Transverse colon (tissue), 4 donors: ENCODE measurements at regions of chr7 and their contacts with region 1.

Region 1: DNA sequence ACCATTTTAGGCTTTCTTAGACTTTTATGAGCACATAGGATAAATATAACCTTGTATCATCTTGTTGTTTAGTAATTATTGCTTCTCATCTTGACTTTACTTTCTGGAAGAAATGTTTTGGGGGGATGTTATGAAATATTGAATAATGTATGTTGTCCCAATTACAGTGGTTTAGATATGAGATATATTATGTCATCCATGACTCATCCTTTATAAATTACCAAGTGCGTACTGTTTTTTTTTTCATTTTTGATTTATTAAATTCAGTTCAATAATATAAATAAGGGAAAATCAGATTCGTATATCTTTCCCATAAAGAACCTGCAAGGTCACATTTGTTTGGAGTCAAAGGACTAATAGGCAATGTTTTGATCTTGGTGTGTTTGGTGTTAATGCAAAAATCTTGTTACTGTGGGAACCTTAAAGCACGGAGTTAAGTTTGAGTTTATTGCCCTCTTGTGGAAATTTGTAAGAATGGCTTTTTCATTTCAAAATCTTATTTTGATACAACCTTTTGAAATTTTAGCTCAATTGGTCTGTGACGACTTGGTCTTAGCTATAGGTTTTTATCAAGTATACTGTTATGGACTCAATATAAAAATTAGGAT is 108.6 kb downstream of the SRI start:
- DNase-seq: no peak
- H3K4me3 ChIP-seq: no peak overlapping the region
- H3K27ac ChIP-seq: no peak overlapping the region
- H3K4me1 ChIP-seq: no peaks in the 10 kb centered on the region
- H3K27me3 ChIP-seq: no peaks in the 10 kb centered on the region
- CTCF ChIP-seq: peak; percentile 40 to 53 (median 51)
- EP300 ChIP-seq: no peak
- POLR2A ChIP-seq: no peak

Region 2: GRCh38 chr7:87797798-87798403 is 313.3 kb before region 1 on chr7:
- in situ Hi-C with region 1: loop called in 2 of 4 experiments (anchors 25 kb)
- intact Hi-C with region 1: no loop called
- DNase-seq: no peak
- H3K4me3 ChIP-seq: no peak overlapping the region
- H3K27ac ChIP-seq: no peak overlapping the region
- H3K4me1 ChIP-seq: peaks cover 0 to 4% (median 1%) of the 10 kb centered on the region in 4 donors
- H3K27me3 ChIP-seq: no peaks in the 10 kb centered on the region
- CTCF ChIP-seq: peak; percentile 38 to 62 (median 47)
- EP300 ChIP-seq: no peak
- POLR2A ChIP-seq: no peak

Region 3: DNA sequence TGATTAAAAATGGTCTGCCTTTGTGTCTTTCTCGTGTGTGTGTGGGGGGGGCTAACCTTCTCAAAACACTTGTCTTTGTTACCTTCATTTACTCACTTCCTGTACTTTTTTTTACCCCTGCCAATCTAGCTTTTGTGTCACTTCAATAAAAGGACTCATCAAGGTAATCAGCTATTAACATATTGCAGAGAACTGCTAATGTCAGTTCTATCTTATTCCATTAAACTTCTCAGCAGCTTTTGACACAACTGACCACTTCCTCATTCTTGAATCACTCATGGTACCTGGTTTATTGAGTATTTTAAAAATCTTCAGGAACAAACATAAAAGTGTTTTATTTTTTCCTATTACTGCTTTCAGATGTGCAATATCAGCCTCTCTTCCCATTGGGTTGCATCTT is 294.9 kb before region 1 on chr7:
- in situ Hi-C with region 1: loop called in 1 of 4 experiments (anchors 25 kb)
- intact Hi-C with region 1: no loop called
- DNase-seq: no peak
- H3K4me3 ChIP-seq: no peak overlapping the region
- H3K27ac ChIP-seq: no peak overlapping the region
- H3K4me1 ChIP-seq: no peaks in the 10 kb centered on the region
- H3K27me3 ChIP-seq: no peaks in the 10 kb centered on the region
- CTCF ChIP-seq: no peak
- EP300 ChIP-seq: no peak
- POLR2A ChIP-seq: no peak

Region 4: DNA sequence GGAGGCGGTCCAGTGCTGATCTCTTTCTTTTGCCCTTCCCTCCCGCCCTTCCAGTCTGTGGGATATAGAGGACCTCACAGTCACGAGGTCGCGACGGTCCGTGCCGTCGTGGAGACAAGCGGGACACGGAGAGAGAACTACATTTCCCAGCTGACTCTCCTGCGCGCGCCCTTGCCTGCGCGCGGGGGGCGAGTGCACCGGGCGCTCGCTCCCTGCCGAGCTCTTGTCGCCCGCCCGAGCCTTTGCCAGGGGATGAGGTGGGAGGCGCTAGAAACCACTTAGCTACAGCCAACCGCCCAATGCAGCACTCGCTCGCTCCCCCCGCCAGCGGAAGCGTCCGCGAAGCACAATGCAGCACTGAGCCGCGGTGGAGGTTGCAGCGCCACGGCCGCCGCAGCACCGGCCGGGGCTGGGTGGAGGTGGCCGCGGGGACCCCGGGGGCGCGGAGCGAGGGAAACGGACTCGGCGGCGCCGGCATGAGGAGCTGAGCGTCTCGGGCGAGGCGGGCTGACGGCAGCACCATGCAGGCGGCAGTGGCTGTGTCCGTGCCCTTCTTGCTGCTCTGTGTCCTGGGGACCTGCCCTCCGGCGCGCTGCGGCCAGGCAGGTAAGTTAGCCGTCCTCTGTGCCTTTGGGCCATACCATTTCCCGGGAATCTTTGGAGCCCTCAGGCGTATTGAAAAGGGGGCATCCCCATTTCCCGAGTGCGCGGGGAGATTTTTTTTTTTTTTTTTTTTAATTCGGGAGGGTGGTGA is 177.1 kb before region 1 on chr7 and contains the start of gene ADAM22:
- in situ Hi-C with region 1: loop called in 1 of 4 experiments (anchors 25 kb)
- intact Hi-C with region 1: no loop called
- DNase-seq: peak; percentile 89
- H3K4me3 ChIP-seq: peak within 1 kb of the TSS; percentile 47 to 82 (median 74)
- H3K27ac ChIP-seq: peak within 1 kb of the TSS; percentile 50 to 79 (median 70)
- H3K4me1 ChIP-seq: peaks cover 5 to 13% (median 9%) of the 10 kb centered on the region in 4 donors
- H3K27me3 ChIP-seq: peaks cover 4% of the 10 kb centered on the region
- CTCF ChIP-seq: no peak
- EP300 ChIP-seq: no peak
- POLR2A ChIP-seq: peak; percentile 44
- total RNA-seq, gene ADAM22: 3.8 to 17.3 (median 6.0) TPM